ENCODE measurements at regions of chr7 and their contacts with region 1.

Region 1: DNA sequence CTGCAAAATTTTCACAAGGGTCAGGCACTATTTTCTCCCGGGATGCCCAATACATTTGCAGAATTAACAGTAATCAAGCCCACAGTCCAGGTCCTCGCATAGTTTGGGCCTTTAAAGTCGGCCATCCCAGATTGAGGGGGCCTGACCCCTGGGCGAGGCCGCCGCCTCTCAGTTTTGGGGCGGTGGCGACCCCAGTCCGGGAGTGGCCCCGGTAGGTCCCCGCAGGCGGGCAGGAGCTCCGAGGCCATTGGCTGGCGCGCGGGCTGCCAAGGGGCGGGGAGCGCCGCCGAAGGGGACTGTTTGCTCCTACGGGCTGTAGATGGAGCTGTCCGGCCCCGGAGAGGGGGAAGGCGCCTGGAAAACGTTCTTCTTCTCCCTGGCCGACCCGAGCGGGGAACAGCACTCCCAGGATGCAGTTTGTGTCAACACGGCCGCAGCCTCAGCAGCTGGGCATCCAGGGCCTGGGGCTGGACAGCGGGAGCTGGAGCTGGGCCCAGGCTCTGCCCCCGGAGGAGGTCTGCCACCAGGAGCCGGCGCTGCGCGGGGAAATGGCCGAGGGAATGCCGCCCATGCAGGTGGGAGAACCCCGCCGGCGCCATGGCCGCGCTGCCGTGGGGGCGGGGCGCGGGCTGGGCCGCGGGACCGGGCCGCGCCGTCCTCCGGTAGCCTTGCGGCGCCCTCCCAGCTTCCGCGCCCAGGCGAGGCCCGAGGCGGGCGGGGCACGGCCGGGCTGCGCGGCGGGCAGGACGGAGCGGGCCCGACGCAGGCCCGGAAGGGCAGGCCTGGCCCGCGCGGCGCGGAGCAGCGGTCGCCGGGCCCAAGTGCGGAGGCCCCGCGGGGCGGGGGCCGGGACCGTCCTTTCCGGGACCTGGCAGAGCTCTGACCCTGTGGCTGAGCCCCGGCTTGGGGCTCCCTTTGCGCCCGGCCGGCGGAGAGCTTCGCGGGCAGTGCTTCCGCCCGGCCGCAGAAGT is at the start of gene ZNF282:
- H3K4me3 ChIP-seq: peak within 1 kb of the TSS; percentile 99
- H3K27ac ChIP-seq: peak within 1 kb of the TSS; percentile 95
- H3K4me1 ChIP-seq: no peaks in the 10 kb centered on the region
- CTCF ChIP-seq: peak; percentile 97

Region 2: GRCh38 chr7:148919859-148920258 is 275.6 kb before region 1 on chr7:
- CTCF ChIA-PET with region 1: no interaction called
- POLR2A ChIA-PET with region 1: no interaction called
- H3K4me3 ChIP-seq: no peak overlapping the region
- H3K27ac ChIP-seq: no peak overlapping the region
- H3K4me1 ChIP-seq: no peaks in the 10 kb centered on the region
- CTCF ChIP-seq: no peak

Region 3: GRCh38 chr7:149084407-149084806 is 111.1 kb before region 1 on chr7:
- CTCF ChIA-PET with region 1: no interaction called
- POLR2A ChIA-PET with region 1: interaction called, 10 read pairs
- H3K4me3 ChIP-seq: no peak overlapping the region
- H3K27ac ChIP-seq: no peak overlapping the region
- H3K4me1 ChIP-seq: no peaks in the 10 kb centered on the region
- CTCF ChIP-seq: no peak

Region 4: DNA sequence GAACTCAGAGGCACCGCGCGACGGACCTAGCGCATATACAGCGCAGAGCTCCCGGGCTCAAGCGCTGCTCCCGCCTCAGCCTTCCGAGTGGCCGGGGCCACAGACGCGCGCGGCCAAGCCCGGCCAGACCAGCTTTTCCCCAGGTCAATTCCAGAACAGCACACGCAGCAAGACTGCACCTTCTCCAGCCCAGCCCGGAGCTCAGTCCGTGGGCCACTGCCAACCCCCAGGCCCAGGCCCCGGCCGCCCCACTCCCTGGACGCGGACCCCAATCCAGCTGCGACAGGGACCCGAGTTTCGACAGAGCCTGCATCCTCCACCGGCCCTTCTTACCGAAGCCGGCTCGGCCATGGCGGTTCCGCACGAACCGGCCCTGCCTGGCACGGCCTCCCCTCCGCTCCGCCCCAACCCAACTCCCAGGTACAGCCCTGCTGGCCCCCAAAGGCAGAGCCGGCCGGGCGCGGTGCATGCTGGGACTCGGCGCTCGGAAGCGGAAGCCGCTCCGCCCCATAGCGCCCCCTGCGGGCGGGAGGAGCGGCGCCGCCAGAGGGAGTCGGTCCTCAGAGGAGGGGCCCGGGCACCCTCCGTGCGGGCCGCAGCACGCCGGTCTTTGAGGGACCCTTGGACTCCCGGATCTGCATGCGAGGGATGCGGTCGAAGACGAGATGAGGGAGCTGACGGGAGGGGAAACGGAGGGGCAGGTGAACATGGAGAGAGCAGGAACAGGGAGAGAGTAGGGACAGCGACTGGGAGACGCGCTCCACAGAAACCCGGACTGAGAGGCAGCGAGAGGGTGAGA is 69.4 kb before region 1 on chr7 and contains the start of gene ZNF425:
- CTCF ChIA-PET with region 1: interaction called, 11 read pairs
- POLR2A ChIA-PET with region 1: interaction called, 4 read pairs
- H3K4me3 ChIP-seq: peak within 1 kb of the TSS; percentile 73
- H3K27ac ChIP-seq: peak within 1 kb of the TSS; percentile 82
- H3K4me1 ChIP-seq: no peaks in the 10 kb centered on the region
- CTCF ChIP-seq: peak; percentile 100

Region 5: GRCh38 chr7:149147072-149147751 is 48.3 kb before region 1 on chr7 and contains the start of gene ZNF398:
- CTCF ChIA-PET with region 1: interaction called, 7 read pairs
- POLR2A ChIA-PET with region 1: interaction called, 12 read pairs
- H3K4me3 ChIP-seq: peak within 1 kb of the TSS; percentile 65
- H3K27ac ChIP-seq: peak within 1 kb of the TSS; percentile 87
- H3K4me1 ChIP-seq: no peaks in the 10 kb centered on the region
- CTCF ChIP-seq: peak; percentile 74

Region 6: GRCh38 chr7:149180722-149181449 is 14.6 kb before region 1 on chr7:
- CTCF ChIA-PET with region 1: interaction called, 13 read pairs
- POLR2A ChIA-PET with region 1: interaction called, 14 read pairs
- H3K4me3 ChIP-seq: no peak overlapping the region
- H3K27ac ChIP-seq: no peak overlapping the region
- H3K4me1 ChIP-seq: no peaks in the 10 kb centered on the region
- CTCF ChIP-seq: no peak

Region 7: GRCh38 chr7:149205711-149206393 is 10.4 kb after region 1 on chr7:
- CTCF ChIA-PET with region 1: interaction called, 5 read pairs
- POLR2A ChIA-PET with region 1: interaction called, 11 read pairs
- H3K4me3 ChIP-seq: no peak overlapping the region
- H3K27ac ChIP-seq: no peak overlapping the region
- H3K4me1 ChIP-seq: no peaks in the 10 kb centered on the region
- CTCF ChIP-seq: no peak

Measured in HEK293 (cell line).